ENCODE measurements at regions of chr2 and their contacts with region 1.

Region 1: DNA sequence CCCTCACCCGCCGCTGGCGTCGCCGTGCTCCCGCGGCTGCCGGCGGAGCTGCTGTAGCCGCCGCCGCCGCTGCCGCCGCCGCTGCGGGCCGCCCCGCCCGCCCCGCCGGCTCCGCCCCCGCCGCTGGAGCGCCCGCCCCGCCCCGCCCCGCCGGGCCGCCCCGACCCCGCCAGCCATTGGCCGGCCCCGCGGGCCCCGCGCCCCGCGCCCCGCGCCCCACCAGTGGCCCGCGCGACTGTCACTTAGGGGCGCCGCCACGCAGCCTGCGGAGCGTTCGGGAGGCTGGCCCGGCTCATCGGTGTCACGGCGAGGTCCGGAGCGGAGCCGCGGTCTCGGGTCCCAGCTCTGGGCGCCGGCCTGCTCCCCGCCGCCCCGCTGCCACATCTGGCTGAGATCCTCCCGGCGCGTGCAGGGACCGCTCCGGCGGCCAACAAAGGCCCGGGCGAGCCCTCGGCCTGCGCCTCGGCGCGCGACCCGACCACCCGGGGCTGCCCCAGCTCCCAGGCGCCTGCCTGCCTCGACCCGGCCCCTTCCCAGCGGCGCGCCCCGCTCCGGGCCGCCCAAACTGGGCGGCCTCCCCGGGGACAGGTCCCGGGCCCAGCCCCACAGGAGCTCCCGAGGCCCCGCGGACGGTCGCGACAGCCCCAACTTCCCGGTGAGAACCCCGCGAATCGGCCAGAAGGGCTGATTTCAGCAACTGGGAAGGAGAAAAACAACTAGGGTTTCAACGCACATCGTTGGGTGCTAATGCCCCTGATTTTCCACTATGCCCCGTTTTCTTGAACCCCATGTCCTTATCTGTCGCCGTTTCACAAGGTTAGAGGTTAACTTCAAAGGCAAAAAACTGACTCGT is at the start of gene MGAT4A:
- H3K4me3 Mint-ChIP-seq: peak within 1 kb of the TSS; percentile 78
- H3K27ac Mint-ChIP-seq: peak within 1 kb of the TSS; percentile 91
- H3K4me1 Mint-ChIP-seq: peaks cover 50% of the 10 kb centered on the region
- H3K27me3 Mint-ChIP-seq: no peaks in the 10 kb centered on the region

Region 2: DNA sequence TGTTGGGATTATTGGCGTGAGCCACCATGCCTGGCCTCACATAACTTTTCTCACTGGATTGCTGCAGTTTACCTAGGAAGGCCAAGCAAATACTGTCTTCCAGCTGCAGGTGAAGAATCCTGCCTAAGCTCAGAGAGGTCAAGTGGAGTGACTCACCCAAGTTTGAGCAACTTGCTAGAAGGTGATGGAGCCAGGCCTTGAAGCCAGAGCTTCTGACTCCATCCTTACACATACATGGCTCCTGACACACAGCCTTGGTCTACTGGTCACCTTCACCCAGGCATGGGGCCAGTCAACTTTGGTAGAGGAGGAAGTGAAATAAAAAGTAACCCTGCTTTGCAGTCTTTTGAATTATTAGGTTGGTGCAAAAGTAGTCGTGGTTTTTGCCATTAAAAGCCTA is 550.8 kb before region 1 on chr2:
- intact Hi-C with region 1: no loop called
- H3K4me3 Mint-ChIP-seq: no peak overlapping the region
- H3K27ac Mint-ChIP-seq: no peak overlapping the region
- H3K4me1 Mint-ChIP-seq: peaks cover 31% of the 10 kb centered on the region
- H3K27me3 Mint-ChIP-seq: peaks cover 60% of the 10 kb centered on the region

Region 3: GRCh38 chr2:98654699-98655495 is 76.4 kb before region 1 on chr2:
- intact Hi-C with region 1: loop called (anchors 5 kb)
- H3K4me3 Mint-ChIP-seq: no peak overlapping the region
- H3K27ac Mint-ChIP-seq: peak overlapping the region; percentile 80
- H3K4me1 Mint-ChIP-seq: peaks cover 31% of the 10 kb centered on the region
- H3K27me3 Mint-ChIP-seq: no peaks in the 10 kb centered on the region

Region 4: DNA sequence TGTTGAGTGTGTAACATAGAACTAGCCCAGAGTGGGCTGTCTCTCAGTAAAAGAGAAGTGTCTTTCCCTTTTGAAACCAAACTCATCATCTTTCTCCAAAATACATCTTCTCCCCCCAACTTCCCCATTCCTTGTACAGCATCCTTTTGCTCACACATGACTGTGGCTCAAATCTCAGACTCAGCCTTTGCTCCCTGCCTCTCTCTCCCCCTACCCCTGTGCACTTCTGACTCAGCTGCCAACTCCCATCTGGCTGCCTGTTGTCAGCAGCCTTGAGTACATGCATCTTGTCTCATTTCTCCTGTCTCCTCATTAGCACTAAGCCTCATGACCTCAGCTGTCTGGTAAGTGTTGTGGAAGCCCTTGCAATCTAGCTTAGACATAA is 17.8 kb after region 1 on chr2:
- intact Hi-C with region 1: loop called (anchors 1 kb)
- H3K4me3 Mint-ChIP-seq: peak overlapping the region; percentile 69
- H3K27ac Mint-ChIP-seq: peak overlapping the region; percentile 98
- H3K4me1 Mint-ChIP-seq: peaks cover 73% of the 10 kb centered on the region
- H3K27me3 Mint-ChIP-seq: no peaks in the 10 kb centered on the region

Region 5: DNA sequence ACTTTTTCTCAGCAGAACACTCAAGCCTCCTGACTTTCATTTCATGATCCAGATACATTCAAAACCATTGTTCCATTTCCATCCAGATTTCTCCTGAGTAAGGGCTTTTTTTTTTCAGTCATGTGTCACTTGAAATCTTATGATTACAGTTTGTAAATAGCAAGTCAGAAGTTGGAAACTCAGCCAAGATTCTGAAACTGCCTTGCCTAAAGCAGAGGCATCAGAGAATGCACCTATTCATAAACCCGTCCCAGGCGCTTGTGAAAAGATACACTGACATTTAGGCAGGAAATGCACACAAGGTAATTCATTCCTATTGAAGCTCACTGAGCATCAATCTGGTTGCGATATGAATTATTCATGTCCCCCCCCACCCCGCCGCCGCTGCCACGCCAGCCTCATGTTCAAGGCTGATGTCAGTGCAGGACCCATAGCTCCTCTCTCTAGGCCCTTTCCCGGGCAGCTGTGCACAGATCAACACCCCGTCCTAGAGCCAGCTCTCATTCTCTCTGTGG is 30.1 kb after region 1 on chr2:
- intact Hi-C with region 1: no loop called
- H3K4me3 Mint-ChIP-seq: peak overlapping the region; percentile 11
- H3K27ac Mint-ChIP-seq: peak overlapping the region; percentile 95
- H3K4me1 Mint-ChIP-seq: peaks cover 83% of the 10 kb centered on the region
- H3K27me3 Mint-ChIP-seq: no peaks in the 10 kb centered on the region

Region 6: GRCh38 chr2:98771721-98772524 is 40.7 kb after region 1 on chr2:
- intact Hi-C with region 1: loop called (anchors 2 kb)
- H3K4me3 Mint-ChIP-seq: peak overlapping the region; percentile 81
- H3K27ac Mint-ChIP-seq: peak overlapping the region; percentile 91
- H3K4me1 Mint-ChIP-seq: peaks cover 90% of the 10 kb centered on the region
- H3K27me3 Mint-ChIP-seq: no peaks in the 10 kb centered on the region

Region 7: GRCh38 chr2:98822301-98823164 is 91.3 kb after region 1 on chr2:
- intact Hi-C with region 1: loop called (anchors 1 kb)
- H3K4me3 Mint-ChIP-seq: peak overlapping the region; percentile 79
- H3K27ac Mint-ChIP-seq: peak overlapping the region; percentile 89
- H3K4me1 Mint-ChIP-seq: peaks cover 54% of the 10 kb centered on the region
- H3K27me3 Mint-ChIP-seq: peaks cover 6% of the 10 kb centered on the region

Region 8: GRCh38 chr2:98835831-98836385 is 104.6 kb after region 1 on chr2:
- intact Hi-C with region 1: loop called (anchors 5 kb)
- H3K4me3 Mint-ChIP-seq: no peak overlapping the region
- H3K27ac Mint-ChIP-seq: peak overlapping the region; percentile 63
- H3K4me1 Mint-ChIP-seq: peaks cover 42% of the 10 kb centered on the region
- H3K27me3 Mint-ChIP-seq: no peaks in the 10 kb centered on the region